Endothelial cell of umbilical vein (primary cell): ENCODE measurements at regions of chr6 and their contacts with region 1.

Region 1: GRCh38 chr6:18335948-18336347 is 51.2 kb upstream of the RNF144B start:
- DNase-seq: no peak
- H3K4me3 ChIP-seq: no peak overlapping the region
- H3K27ac ChIP-seq: no peak overlapping the region
- H3K4me1 ChIP-seq: no peaks in the 10 kb centered on the region
- H3K27me3 ChIP-seq: no peaks in the 10 kb centered on the region
- CTCF ChIP-seq: no peak
- POLR2A ChIP-seq: no peak

Region 2: DNA sequence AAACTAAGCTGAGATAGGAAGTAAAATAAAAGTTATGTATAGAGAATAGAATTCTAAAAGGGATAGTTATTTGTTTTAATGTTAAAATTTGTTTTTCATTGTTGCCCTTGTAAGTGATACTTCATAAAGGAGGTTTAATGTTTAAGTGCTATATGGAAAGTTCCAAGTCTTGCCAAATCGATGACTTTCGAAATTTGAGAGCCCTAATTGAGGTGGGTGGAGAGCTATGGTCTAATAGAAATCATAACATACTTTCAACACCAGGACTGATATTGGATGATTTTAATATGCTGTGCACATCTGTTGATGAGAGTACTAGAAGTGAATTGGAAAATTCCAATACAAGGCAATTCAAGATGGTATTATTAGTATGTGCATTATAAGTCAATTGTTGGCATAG is 115.8 kb after region 1 on chr6:
- CTCF ChIA-PET with region 1: no interaction called
- POLR2A ChIA-PET with region 1: no interaction called
- dilution Hi-C with region 1: no loop called
- intact Hi-C with region 1: loop called (anchors 5 kb)
- DNase-seq: no peak
- H3K4me3 ChIP-seq: no peak overlapping the region
- H3K27ac ChIP-seq: no peak overlapping the region
- H3K4me1 ChIP-seq: peaks cover 30% of the 10 kb centered on the region
- H3K27me3 ChIP-seq: no peaks in the 10 kb centered on the region
- CTCF ChIP-seq: no peak
- POLR2A ChIP-seq: no peak